SK-N-SH (cell line): ENCODE measurements at regions of chrX and their contacts with region 1.

Region 1: DNA sequence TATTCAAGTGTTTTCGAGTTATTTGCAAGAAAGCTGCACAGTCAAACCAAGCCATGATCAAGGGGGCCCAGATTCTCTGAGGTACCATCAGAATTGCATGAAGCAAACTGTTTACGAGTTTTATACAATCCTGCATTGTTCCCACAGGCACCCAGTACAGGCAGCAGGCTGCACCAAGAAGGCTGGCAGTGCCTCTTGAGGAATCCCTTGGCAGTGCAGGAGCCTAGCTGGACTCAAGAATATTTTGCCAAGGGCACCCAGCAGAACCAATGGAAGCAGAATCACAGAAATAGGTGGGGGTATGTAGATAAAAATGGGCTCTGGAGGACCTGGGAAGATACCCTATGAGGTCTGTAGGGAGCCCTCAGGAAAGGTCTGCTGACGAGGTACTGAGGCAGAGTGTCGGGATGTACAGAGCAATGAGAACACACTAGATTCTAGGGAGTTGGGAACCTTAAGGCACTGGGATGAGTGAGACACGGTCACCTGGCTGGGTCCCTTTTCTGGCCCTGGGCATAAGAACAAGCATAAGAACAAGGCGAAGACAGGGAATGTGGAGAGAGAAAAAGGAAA is 2.5 kb upstream of the PLP1 start:
- DNase-seq: peak; percentile 28
- H3K4me3 ChIP-seq: no peak overlapping the region
- H3K27ac ChIP-seq: no peak overlapping the region
- H3K4me1 ChIP-seq: peaks cover 0 to 3% of the 10 kb centered on the region in 2 experiments; a peak in 1 of 4 replicates
- H3K27me3 ChIP-seq: peaks cover 9% of the 10 kb centered on the region; the same call in 1 of the 2 replicates
- CTCF ChIP-seq: peak; percentile 69
- EP300 ChIP-seq: no peak
- RAD21 ChIP-seq: peak; percentile 75

Region 2: GRCh38 chrX:103446665-103447302 is 327.4 kb before region 1 on chrX:
- CTCF ChIA-PET with region 1: no interaction called
- POLR2A ChIA-PET with region 1: no interaction called
- DNase-seq: no peak
- H3K4me3 ChIP-seq: no peak overlapping the region
- H3K27ac ChIP-seq: peak overlapping the region in 1 of 2 experiments; percentile 37; a peak in 1 of 4 replicates
- H3K4me1 ChIP-seq: no peaks in the 10 kb centered on the region
- H3K27me3 ChIP-seq: no peaks in the 10 kb centered on the region
- CTCF ChIP-seq: no peak
- EP300 ChIP-seq: no peak
- RAD21 ChIP-seq: no peak

Region 3: GRCh38 chrX:103686199-103687072 is 87.7 kb before region 1 on chrX and contains the start of gene MORF4L2:
- CTCF ChIA-PET with region 1: interaction called, 11 read pairs
- POLR2A ChIA-PET with region 1: interaction called, 3 read pairs
- DNase-seq: peak; percentile 62
- H3K4me3 ChIP-seq: peak within 1 kb of the TSS; percentile 73 to 87
- H3K27ac ChIP-seq: peak within 1 kb of the TSS; percentile 92 to 94
- H3K4me1 ChIP-seq: peaks cover 4 to 5% of the 10 kb centered on the region in 2 experiments; a peak in 3 of 4 replicates
- H3K27me3 ChIP-seq: no peaks in the 10 kb centered on the region
- CTCF ChIP-seq: no peak
- EP300 ChIP-seq: 0 out of 4 replicates have a peak, but pooled peaks of 1 of the 2 experiments have one; percentile 28
- RAD21 ChIP-seq: no peak
- polyA plus RNA-seq, gene MORF4L2: 221 and 363 TPM in 2 replicates

Region 4: DNA sequence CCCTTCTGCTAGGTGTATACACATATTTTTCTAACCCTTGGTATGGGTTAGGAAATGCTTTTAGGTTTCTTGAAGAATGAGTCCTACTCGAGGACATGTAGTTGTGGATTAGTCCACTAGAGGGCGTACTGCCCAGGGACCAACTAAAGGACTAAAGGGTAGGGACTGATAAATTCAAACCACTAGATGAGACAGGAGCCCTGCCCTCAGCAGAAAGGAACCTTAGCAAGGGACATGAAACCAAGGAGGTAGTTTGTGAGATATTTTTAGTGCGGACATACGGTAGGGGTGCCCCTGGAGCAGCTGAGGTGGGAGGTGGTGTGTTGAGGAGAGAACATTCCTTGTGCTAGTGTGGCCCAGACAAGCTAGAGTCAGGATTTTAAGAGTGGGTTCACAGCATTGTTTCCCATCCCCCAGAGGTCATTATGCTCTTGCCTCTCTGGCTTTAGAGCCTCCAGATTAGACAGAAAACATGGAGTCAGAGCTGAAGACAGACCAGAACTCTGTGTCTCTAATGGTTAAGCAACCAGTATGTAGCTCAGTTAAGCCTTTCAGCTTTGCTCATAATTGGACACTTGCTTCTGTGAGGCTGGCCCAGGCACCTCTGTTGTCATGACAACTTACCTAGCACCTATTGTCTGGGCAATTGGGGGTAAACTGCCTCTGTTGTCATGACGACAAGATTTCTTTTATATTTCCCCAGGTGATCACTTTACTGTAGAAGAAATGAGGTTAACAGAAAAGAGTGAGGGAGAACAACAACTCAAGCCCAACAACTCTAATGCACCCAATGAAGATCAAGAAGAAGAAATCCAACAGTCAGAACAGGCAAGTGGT is 62.4 kb before region 1 on chrX:
- CTCF ChIA-PET with region 1: interaction called, 35 read pairs
- POLR2A ChIA-PET with region 1: no interaction called
- DNase-seq: peak; percentile 64
- H3K4me3 ChIP-seq: no peak overlapping the region
- H3K27ac ChIP-seq: no peak overlapping the region
- H3K4me1 ChIP-seq: no peaks in the 10 kb centered on the region
- H3K27me3 ChIP-seq: peaks cover 8% of the 10 kb centered on the region; the same call in 1 of the 2 replicates
- CTCF ChIP-seq: peak; percentile 77
- EP300 ChIP-seq: no peak
- RAD21 ChIP-seq: peak; percentile 56

Region 5: GRCh38 chrX:103758555-103758954 is 15.6 kb before region 1 on chrX:
- CTCF ChIA-PET with region 1: interaction called, 13 read pairs
- POLR2A ChIA-PET with region 1: no interaction called
- DNase-seq: no peak
- H3K4me3 ChIP-seq: no peak overlapping the region
- H3K27ac ChIP-seq: no peak overlapping the region
- H3K4me1 ChIP-seq: peaks cover 0 to 8% of the 10 kb centered on the region in 2 experiments; a peak in 1 of 4 replicates
- H3K27me3 ChIP-seq: no peaks in the 10 kb centered on the region; the same call in 1 of the 2 replicates
- CTCF ChIP-seq: no peak
- EP300 ChIP-seq: no peak
- RAD21 ChIP-seq: no peak